Motor neuron (in vitro differentiated cells): ENCODE measurements at regions of chr9 and their contacts with region 1.

Region 1: GRCh38 chr9:27548055-27548741 is 18.6 kb upstream of the MOB3B start:
- ATAC-seq: peak; percentile 46 to 83 (median 61)
- H3K4me3 ChIP-seq: no peak overlapping the region
- H3K27ac ChIP-seq: no peak overlapping the region
- H3K4me1 ChIP-seq: no peaks in the 10 kb centered on the region

Region 2: GRCh38 chr9:27333241-27334052 is 214.8 kb before region 1 on chr9:
- in situ Hi-C with region 1: loop called in 6 of 9 experiments (anchors 10 to 25 kb)
- ATAC-seq: peak; percentile 22 to 80 (median 75)
- H3K4me3 ChIP-seq: no peak overlapping the region
- H3K27ac ChIP-seq: no peak overlapping the region
- H3K4me1 ChIP-seq: peaks cover 2 to 5% of the 10 kb centered on the region in 2 donors